ENCODE measurements at regions of chr12 and their contacts with region 1.

Region 1: DNA sequence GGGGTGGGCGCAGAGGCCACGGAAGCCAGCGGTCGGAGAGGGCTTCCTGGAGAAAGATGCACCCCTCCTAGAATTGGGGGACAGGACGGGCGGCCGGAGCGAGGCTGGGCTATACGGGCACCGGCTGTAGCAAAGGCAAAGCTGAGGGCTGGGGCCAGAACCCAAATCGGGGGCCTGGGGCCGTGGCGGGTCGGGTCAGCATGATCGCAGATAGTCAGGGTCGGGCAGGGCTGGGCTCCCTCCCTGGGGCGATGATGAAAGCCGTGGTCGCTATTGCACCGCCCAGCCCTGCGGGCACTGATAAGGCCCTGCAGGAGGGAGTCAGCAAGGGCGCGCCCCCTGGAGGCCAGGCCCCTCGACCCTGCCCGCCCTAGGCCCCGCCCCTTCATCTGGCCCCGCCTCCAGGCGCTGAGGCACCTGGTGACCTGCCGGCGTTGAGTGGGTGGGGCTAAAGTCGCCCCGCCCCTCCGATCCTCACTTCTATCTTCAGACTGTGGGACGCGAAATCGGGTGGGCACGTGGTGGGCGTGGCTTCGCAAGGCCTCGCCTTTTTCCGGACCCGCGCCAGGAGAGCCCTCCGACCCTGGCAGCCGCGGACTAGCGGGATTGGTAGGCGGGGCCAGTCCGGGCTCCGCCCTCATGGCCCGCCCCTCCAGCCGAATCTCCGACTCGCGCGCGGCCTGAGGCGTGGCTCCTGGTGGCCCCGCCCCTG is 418 bp upstream of the SH2B3 start:
- DNase-seq: peak; percentile 95 to 99 (median 98)
- H3K4me3 ChIP-seq: peak overlapping the region; percentile 66
- H3K27ac ChIP-seq: peak overlapping the region; percentile 38 to 83
- H3K4me1 ChIP-seq: peaks cover 11% of the 10 kb centered on the region
- H3K27me3 ChIP-seq: no peaks in the 10 kb centered on the region
- CTCF ChIP-seq: peak; percentile 35 to 71 (median 55)
- EP300 ChIP-seq: no peak
- POLR2A ChIP-seq: peak; percentile 15

Region 2: GRCh38 chr12:111444925-111445725 is 39.8 kb after region 1 on chr12:
- intact Hi-C with region 1: loop called in 3 of 4 experiments (anchors 5 kb)
- DNase-seq: peak in 2 of 5 donors; percentile 22 to 39
- H3K4me3 ChIP-seq: no peak overlapping the region
- H3K27ac ChIP-seq: no peak overlapping the region
- H3K4me1 ChIP-seq: peaks cover 6% of the 10 kb centered on the region
- H3K27me3 ChIP-seq: no peaks in the 10 kb centered on the region
- CTCF ChIP-seq: no peak
- EP300 ChIP-seq: no peak
- POLR2A ChIP-seq: no peak

Region 3: DNA sequence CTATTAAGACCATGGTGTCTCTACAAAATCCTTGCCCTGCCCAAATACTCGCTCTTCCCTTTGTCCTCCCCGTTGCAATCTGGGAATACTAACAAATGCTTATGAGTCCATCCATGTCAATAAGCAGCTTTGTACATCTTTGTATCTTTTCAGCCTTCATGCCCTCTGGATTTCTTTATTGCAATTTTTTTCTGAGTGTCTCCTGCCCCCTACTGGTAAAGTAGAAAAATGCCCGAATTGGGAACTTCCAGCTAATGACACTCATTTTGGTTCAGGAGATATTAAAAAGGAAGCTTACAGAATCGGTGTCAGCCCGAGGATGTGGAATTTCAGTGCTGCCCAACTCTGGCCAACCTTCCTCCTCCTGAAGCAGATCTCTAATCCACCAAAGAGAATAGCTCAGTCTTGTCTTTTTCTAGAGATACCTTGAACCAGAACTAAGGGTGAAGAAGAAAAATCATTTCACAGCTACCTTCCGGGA is 46.4 kb after region 1 on chr12:
- intact Hi-C with region 1: loop called in 3 of 4 experiments (anchors 5 kb)
- DNase-seq: no peak
- H3K4me3 ChIP-seq: no peak overlapping the region
- H3K27ac ChIP-seq: no peak overlapping the region
- H3K4me1 ChIP-seq: no peaks in the 10 kb centered on the region
- H3K27me3 ChIP-seq: no peaks in the 10 kb centered on the region
- CTCF ChIP-seq: peak; percentile 57 to 81 (median 75)
- EP300 ChIP-seq: no peak
- POLR2A ChIP-seq: no peak